ENCODE measurements at regions of chr1 and their contacts with region 1.

Region 1: DNA sequence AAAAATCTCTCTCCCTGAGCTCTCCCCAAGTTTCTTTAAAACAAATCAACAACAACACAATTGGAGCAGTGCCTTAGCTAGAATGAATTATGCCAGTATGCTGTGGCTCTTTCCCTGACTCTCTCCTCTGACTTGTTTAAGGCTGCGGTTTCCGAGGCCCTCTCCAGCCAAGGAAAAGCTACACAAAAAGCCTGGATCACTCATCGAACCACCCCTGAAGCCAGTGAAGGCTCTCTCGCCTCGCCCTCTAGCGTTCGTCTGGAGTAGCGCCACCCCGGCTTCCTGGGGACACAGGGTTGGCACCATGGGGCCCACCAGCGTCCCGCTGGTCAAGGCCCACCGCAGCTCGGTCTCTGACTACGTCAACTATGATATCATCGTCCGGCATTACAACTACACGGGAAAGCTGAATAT is 1.9 kb downstream of the S1PR1 start:
- DNase-seq: peak; percentile 63 to 92 (median 84)
- ATAC-seq: peak; percentile 27 to 39
- H3K4me3 Mint-ChIP-seq: peak overlapping the region; percentile 92 to 100 (median 100)
- H3K27ac Mint-ChIP-seq: peak overlapping the region; percentile 95 to 100 (median 99)
- H3K4me1 Mint-ChIP-seq: peaks cover 37 to 72% (median 64%) of the 10 kb centered on the region in 4 donors
- H3K27me3 Mint-ChIP-seq: no peaks in the 10 kb centered on the region

Region 2: DNA sequence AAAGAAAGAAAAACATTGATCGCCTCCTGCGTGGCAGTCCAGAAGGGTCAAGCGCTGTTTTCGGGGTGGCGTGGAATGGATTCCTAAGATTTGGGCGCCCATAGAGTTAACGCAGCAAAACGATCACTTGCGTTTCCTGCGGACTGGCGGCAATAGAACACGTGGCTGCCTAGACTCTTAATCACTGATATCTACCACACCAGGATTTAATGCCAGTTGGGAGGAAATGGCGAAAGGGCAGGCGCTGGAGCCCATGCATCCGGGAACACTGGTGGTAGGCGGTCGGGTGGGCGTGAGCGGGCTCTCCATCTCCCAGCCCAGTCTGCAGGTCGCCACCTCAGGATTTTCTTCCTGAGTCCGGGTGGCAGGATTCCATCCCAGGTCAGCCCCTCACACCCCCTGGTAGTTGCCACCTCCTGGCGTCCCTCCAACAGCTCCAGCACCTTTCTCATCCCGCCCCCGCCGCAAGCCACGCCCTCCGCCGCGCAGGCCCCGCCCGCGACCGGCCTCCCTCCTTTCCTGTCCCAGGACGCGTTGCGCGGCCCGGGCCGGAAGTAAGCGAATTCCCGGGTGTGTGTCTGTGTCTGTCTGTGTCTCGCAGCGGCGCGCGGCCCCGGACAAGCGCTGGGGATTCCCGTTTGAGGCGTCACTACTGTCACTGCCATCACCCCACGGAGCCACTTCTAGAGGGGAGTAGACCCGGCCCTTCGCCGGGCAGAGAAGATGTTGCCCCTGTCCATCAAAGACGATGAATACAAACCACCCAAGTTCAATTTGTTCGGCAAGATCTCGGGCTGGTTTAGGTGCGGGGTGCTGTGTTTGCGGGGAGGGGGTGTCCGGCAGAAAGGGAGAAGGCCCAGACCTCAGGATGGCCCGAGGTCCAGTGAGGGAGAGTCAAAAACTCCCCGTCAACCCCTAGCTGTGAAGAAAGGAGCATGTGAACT is 342.9 kb before region 1 on chr1 and contains the start of gene SLC30A7:
- POLR2A ChIA-PET with region 1: interaction called, 18 read pairs
- DNase-seq: peak; percentile 92 to 98 (median 94)
- ATAC-seq: peak; percentile 78
- H3K4me3 Mint-ChIP-seq: peak within 1 kb of the TSS; percentile 96 to 100 (median 99)
- H3K27ac Mint-ChIP-seq: peak within 1 kb of the TSS; percentile 98 to 100 (median 100)
- H3K4me1 Mint-ChIP-seq: peaks cover 14 to 60% (median 48%) of the 10 kb centered on the region in 4 donors
- H3K27me3 Mint-ChIP-seq: peaks cover 0 to 6% (median 0%) of the 10 kb centered on the region in 5 donors
- polyA plus RNA-seq, gene SLC30A7: 8.1 to 10.8 (median 10.5) TPM

Region 3: GRCh38 chr1:100941098-100941527 is 297.6 kb before region 1 on chr1:
- POLR2A ChIA-PET with region 1: interaction called, 18 read pairs
- DNase-seq: no peak
- ATAC-seq: no peak
- H3K4me3 Mint-ChIP-seq: peak overlapping the region in 7 of 10 donors; percentile 55 to 78 (median 74)
- H3K27ac Mint-ChIP-seq: peak overlapping the region; percentile 83 to 96 (median 92)
- H3K4me1 Mint-ChIP-seq: peaks cover 31 to 62% (median 48%) of the 10 kb centered on the region in 4 donors
- H3K27me3 Mint-ChIP-seq: no peaks in the 10 kb centered on the region

Region 4: GRCh38 chr1:101095576-101095975 is 143.1 kb before region 1 on chr1:
- POLR2A ChIA-PET with region 1: no interaction called
- DNase-seq: no peak
- ATAC-seq: no peak
- H3K4me3 Mint-ChIP-seq: no peak overlapping the region
- H3K27ac Mint-ChIP-seq: peak overlapping the region in 2 of 10 donors; percentile 15 to 81
- H3K4me1 Mint-ChIP-seq: peaks cover 0 to 7% (median 2%) of the 10 kb centered on the region in 4 donors
- H3K27me3 Mint-ChIP-seq: no peaks in the 10 kb centered on the region

Region 5: DNA sequence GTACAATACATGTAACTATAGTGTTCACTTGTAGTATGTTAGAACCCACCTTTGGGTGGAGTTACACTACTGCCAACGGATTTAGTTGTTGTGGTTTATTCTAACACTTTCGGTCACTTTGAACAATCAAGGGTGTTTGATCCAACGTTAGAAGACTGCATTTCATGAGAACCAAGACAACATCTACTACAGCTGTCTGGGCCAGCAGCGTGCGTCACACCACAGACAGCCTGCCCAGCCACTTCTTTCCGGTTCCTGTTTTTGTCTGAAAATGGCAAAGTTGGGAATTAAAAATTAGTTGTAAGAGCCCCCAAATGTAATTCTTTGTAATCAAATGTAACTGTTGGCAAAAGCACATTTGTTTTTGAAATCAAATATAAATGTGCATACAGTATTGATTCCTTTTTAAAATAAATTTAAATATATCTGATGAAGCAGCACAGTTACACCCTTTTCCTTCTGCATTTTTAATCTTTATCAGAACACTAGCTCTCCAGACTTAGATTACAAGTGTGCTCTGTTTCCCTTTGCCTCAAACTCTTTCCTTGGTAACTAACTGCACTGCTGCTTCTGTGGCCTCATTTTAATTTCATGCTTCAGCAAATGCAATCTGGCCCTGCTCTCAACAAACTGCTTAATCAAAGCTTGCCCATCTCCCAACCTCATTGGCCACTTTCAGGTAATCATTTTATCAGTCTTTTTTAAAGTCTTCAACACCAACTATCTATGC is 126.5 kb before region 1 on chr1:
- POLR2A ChIA-PET with region 1: interaction called, 59 read pairs
- DNase-seq: peak; percentile 56 to 93 (median 84)
- ATAC-seq: peak; percentile 90 to 94
- H3K4me3 Mint-ChIP-seq: peak overlapping the region; percentile 50 to 86 (median 78)
- H3K27ac Mint-ChIP-seq: peak overlapping the region; percentile 97 to 100 (median 99)
- H3K4me1 Mint-ChIP-seq: peaks cover 39 to 72% (median 61%) of the 10 kb centered on the region in 4 donors
- H3K27me3 Mint-ChIP-seq: no peaks in the 10 kb centered on the region

Region 6: GRCh38 chr1:101145449-101145820 is 93.3 kb before region 1 on chr1:
- POLR2A ChIA-PET with region 1: interaction called, 81 read pairs
- DNase-seq: no peak
- ATAC-seq: no peak
- H3K4me3 Mint-ChIP-seq: no peak overlapping the region
- H3K27ac Mint-ChIP-seq: peak overlapping the region in 3 of 10 donors; percentile 9 to 60 (median 36)
- H3K4me1 Mint-ChIP-seq: peaks cover 0 to 11% (median under 1%) of the 10 kb centered on the region in 4 donors
- H3K27me3 Mint-ChIP-seq: no peaks in the 10 kb centered on the region

Region 7: DNA sequence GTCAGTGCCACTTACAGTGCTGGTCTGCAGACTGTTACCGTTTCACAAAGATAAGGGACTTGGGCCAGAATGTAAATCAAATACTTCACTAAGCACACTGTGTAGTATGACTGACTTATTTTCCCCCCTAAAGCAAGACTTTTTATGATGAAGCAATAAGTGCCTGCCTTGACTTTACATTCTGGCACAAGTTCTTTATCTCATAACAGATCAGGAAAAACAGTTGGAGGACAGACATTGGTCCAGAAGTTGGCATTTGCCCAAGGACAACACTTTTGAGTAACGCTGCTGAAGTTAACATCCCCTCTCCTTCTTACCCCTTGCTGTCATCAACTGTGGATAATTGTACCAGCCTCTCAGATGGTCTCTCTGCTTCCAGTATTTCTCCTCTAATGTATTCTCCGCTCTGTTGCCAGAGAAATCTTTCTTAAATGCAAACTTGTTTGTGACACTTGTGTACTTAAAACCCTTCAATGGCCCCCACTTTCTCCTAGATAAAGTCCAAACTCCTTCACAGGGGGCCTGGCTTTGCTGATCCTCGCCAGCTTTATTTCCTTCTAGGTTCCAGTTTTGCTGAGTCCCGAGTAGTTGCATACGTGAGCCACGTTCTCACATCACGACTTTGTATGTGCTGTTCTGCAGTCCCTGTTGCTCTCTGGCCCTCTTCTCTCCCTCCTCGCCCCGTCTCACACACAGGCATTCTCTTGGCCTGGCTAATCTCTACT is 43.8 kb after region 1 on chr1:
- POLR2A ChIA-PET with region 1: interaction called, 240 read pairs
- DNase-seq: no peak
- ATAC-seq: no peak
- H3K4me3 Mint-ChIP-seq: peak overlapping the region in 8 of 10 donors; percentile 3 to 85 (median 48)
- H3K27ac Mint-ChIP-seq: peak overlapping the region; percentile 95 to 99 (median 98)
- H3K4me1 Mint-ChIP-seq: peaks cover 61 to 95% (median 94%) of the 10 kb centered on the region in 4 donors
- H3K27me3 Mint-ChIP-seq: no peaks in the 10 kb centered on the region

Region 8: DNA sequence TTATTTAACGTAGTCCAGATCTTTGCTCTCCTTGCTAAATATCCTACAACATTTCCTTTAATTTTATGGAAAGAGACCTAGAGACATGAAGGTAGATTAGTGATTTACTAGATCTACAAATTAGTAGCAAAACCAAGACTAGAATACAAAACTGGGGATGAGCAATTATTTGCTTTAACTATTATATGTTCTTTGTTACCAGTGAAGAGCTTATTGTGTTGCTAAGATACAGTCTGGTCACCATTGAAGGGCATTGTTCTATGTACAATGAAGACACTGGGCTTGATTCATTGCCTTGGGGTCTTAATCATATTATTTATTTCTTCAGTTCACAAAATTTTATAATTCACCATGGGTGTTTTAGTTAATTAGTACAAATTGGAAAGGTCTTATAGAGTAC is 86.5 kb after region 1 on chr1:
- POLR2A ChIA-PET with region 1: no interaction called
- DNase-seq: no peak
- ATAC-seq: no peak
- H3K4me3 Mint-ChIP-seq: no peak overlapping the region
- H3K27ac Mint-ChIP-seq: no peak overlapping the region
- H3K4me1 Mint-ChIP-seq: peaks cover 0 to 5% (median 2%) of the 10 kb centered on the region in 4 donors
- H3K27me3 Mint-ChIP-seq: no peaks in the 10 kb centered on the region

Measured in naive thymus-derived CD8-positive, alpha-beta T cell (primary cell).